ENCODE measurements at regions of chr10 and their contacts with region 1.

Region 1: GRCh38 chr10:61896854-61897661 is 4.4 kb upstream of the ARID5B start:
- DNase-seq: peak; percentile 80
- H3K4me3 Mint-ChIP-seq: peak overlapping the region; percentile 50
- H3K27ac Mint-ChIP-seq: no peak overlapping the region
- H3K4me1 Mint-ChIP-seq: peaks cover 33% of the 10 kb centered on the region
- H3K27me3 Mint-ChIP-seq: no peaks in the 10 kb centered on the region
- CTCF ChIP-seq: peak; percentile 50

Region 2: GRCh38 chr10:61744469-61744868 is 152.6 kb before region 1 on chr10:
- CTCF ChIA-PET with region 1: interaction called, 3 read pairs
- POLR2A ChIA-PET with region 1: interaction called, 10 read pairs
- intact Hi-C with region 1: no loop called
- DNase-seq: no peak
- H3K4me3 Mint-ChIP-seq: no peak overlapping the region
- H3K27ac Mint-ChIP-seq: no peak overlapping the region
- H3K4me1 Mint-ChIP-seq: peaks cover 11% of the 10 kb centered on the region
- H3K27me3 Mint-ChIP-seq: no peaks in the 10 kb centered on the region
- CTCF ChIP-seq: peak; percentile 25

Region 3: GRCh38 chr10:61750929-61751471 is 146.1 kb before region 1 on chr10:
- CTCF ChIA-PET with region 1: interaction called, 6 read pairs
- POLR2A ChIA-PET with region 1: interaction called, 19 read pairs
- intact Hi-C with region 1: loop called (anchors 1 kb)
- DNase-seq: peak; percentile 68
- H3K4me3 Mint-ChIP-seq: no peak overlapping the region
- H3K27ac Mint-ChIP-seq: peak overlapping the region; percentile 86
- H3K4me1 Mint-ChIP-seq: peaks cover 31% of the 10 kb centered on the region
- H3K27me3 Mint-ChIP-seq: no peaks in the 10 kb centered on the region
- CTCF ChIP-seq: peak; percentile 47

Region 4: DNA sequence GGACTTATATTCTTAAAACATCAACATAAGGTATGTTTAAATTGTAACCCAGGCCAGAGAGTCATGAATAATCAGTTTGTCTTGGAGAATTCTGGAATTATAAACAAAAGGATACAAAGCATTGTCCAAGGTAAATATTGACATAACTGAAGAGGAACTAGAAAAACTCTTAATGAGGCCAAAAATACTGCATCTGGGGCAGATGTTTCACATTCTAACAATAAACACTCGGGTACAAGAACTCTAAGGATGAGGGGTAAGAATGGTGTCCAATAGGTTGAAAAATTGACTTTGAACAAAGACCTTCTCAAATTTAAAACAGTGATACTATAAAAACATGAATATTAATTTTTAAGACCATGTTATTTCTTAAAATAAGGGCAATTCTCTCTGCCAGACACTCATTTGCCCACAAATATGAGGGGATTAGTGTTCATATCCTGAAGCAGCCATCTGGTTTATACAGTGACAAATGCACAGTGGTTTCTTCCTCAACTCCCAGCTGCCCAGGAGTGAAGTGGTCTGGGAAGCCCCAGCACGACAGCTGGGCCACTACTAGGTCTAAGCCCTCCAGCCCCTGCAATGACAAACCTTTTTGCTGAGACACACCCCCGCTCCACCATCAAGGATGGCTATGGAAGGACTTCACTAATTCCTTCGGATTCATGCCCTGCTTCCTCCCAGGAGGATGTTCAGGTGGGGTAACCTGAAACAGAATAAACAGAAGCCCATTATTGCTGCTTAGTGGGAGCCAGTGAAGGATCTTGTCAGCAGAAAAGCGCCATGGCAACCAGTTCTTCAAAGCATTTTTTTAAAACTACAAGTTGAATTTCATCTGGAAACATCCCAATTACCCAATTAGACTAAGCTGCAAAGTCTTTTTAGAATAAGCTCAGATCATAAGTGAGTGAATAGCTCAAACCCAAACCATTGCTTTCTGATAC is 103.0 kb before region 1 on chr10:
- CTCF ChIA-PET with region 1: no interaction called
- POLR2A ChIA-PET with region 1: no interaction called
- intact Hi-C with region 1: no loop called
- DNase-seq: peak; percentile 30
- H3K4me3 Mint-ChIP-seq: no peak overlapping the region
- H3K27ac Mint-ChIP-seq: peak overlapping the region; percentile 20
- H3K4me1 Mint-ChIP-seq: peaks cover 6% of the 10 kb centered on the region
- H3K27me3 Mint-ChIP-seq: no peaks in the 10 kb centered on the region
- CTCF ChIP-seq: no peak

Region 5: GRCh38 chr10:61882621-61883373 is 14.3 kb before region 1 on chr10:
- CTCF ChIA-PET with region 1: interaction called, 17 read pairs
- POLR2A ChIA-PET with region 1: interaction called, 4 read pairs
- intact Hi-C with region 1: no loop called
- DNase-seq: no peak
- H3K4me3 Mint-ChIP-seq: no peak overlapping the region
- H3K27ac Mint-ChIP-seq: no peak overlapping the region
- H3K4me1 Mint-ChIP-seq: peaks cover 7% of the 10 kb centered on the region
- H3K27me3 Mint-ChIP-seq: no peaks in the 10 kb centered on the region
- CTCF ChIP-seq: no peak

Measured in MCF 10A (cell line).